ENCODE measurements at regions of chr12 and their contacts with region 1.

Region 1: DNA sequence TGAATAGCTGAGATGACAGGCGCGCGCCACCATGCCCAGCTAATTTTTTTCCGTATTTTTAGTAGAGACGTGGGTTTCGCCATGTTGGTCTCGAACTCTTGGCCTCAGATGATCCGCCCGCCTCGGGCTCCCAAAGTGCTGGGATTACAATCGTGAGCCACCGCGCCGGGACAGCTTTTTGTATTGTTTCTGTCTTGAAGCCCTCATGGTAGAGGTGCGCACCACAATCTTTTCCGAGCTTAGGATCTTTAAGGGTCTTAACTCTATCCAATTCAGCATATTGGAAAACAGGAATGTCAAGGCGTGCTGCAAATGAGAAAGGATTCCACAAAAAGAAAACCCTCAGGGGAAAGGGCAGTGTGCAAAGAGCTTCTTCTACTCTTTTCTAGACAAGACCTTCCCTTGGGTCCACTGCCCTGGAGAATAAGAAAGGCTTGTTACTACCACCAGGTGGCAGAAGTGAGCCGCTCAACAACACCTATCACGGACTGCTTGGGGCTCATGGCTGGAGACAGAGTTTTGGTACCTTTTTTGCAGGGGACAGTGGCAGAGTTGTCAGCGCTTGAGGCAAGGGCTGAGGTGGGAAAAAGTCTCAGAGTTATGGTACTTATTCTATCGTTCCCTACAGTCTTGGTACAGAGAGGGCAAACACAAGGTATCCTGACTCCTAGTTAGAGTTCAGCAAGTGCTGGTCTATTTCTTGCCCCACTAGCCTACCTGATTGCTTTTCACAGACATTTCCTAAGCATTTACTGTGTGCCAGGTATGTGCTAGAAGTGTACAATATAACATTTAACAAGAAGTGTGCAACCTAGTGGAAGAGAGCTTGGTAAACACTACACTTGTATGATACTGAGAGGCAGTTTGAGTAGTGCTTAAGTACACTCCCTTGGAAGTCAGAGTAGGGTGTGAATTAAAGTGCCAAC is 16.4 kb upstream of the SP7 start:
- DNase-seq: peak; percentile 92
- ATAC-seq: peak; percentile 99
- H3K4me3 Mint-ChIP-seq: no peak overlapping the region
- H3K27ac Mint-ChIP-seq: peak overlapping the region; percentile 23
- H3K4me1 Mint-ChIP-seq: peaks cover 9% of the 10 kb centered on the region
- H3K27me3 Mint-ChIP-seq: no peaks in the 10 kb centered on the region

Region 2: DNA sequence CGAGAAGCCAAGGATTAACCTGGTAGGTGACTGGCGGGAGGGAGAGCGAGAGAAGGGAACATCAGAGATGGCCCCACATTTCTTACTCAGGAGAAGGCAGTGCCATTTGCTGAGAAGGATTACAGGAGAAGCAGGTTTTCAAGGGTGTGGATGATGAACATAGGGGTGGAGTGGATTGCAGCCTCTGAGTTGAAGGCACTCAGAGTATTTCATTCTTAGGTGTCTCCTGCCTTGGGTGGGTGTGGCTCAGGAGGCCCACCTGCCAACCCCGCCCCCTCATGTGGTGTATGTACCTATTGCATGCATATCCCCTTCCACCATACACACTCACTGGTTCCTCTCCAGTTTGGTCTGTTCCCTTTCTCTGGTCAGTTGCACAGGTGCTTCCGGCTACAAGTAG is 78.1 kb before region 1 on chr12:
- CTCF ChIA-PET with region 1: no interaction called
- POLR2A ChIA-PET with region 1: no interaction called
- DNase-seq: no peak
- ATAC-seq: no peak
- H3K4me3 Mint-ChIP-seq: no peak overlapping the region
- H3K27ac Mint-ChIP-seq: no peak overlapping the region
- H3K4me1 Mint-ChIP-seq: peaks cover 40% of the 10 kb centered on the region
- H3K27me3 Mint-ChIP-seq: no peaks in the 10 kb centered on the region

Region 3: GRCh38 chr12:53336181-53336681 is 16.4 kb before region 1 on chr12 and contains the start of gene SP7:
- CTCF ChIA-PET with region 1: interaction called, 290 read pairs
- POLR2A ChIA-PET with region 1: interaction called, 3 read pairs
- DNase-seq: no peak
- ATAC-seq: peak; percentile 28
- H3K4me3 Mint-ChIP-seq: no peak within 1 kb of the TSS
- H3K27ac Mint-ChIP-seq: no peak within 1 kb of the TSS
- H3K4me1 Mint-ChIP-seq: peaks cover 16% of the 10 kb centered on the region
- H3K27me3 Mint-ChIP-seq: peaks cover 58% of the 10 kb centered on the region
- total RNA-seq, gene SP7: not detected

Region 4: GRCh38 chr12:53379389-53380103 is 27.0 kb after region 1 on chr12:
- CTCF ChIA-PET with region 1: interaction called, 91 read pairs
- POLR2A ChIA-PET with region 1: interaction called, 12 read pairs
- DNase-seq: peak; percentile 99
- ATAC-seq: peak; percentile 80
- H3K4me3 Mint-ChIP-seq: no peak overlapping the region
- H3K27ac Mint-ChIP-seq: no peak overlapping the region
- H3K4me1 Mint-ChIP-seq: peaks cover 35% of the 10 kb centered on the region
- H3K27me3 Mint-ChIP-seq: no peaks in the 10 kb centered on the region

Region 5: DNA sequence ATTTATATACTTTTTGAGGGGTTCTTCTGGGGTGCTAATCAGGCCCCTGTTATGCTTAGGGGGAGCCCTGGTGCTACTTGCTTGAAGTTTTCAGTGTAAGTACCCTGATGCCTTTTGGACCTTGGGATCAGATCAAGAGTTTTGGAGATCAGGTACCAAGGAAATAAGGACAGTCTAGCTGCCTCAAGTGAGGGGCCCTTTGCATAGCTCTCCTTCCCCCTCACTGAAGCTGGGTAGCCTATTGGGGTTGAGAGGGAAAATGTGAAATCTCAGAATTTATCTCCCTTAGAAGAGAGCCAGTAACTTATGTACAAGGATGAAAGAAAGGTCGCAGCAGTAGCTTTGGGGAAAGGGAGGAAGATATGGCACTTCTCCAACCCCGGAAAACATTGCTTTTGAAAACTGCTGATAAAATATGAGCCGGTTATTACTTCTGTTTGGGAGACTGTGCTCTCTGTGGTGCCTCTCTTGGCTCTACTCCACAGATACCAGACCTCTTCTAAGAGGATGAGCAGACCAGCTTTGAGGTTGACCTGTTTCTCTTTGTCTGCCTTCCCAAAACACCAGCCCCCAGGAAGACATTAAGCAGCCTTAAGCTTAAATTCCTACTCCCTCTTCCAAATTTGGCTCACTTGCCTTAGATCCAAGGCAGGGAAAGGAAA is 62.3 kb after region 1 on chr12:
- CTCF ChIA-PET with region 1: interaction called, 171 read pairs
- POLR2A ChIA-PET with region 1: interaction called, 3 read pairs
- DNase-seq: no peak
- ATAC-seq: no peak
- H3K4me3 Mint-ChIP-seq: no peak overlapping the region
- H3K27ac Mint-ChIP-seq: no peak overlapping the region
- H3K4me1 Mint-ChIP-seq: peaks cover 24% of the 10 kb centered on the region
- H3K27me3 Mint-ChIP-seq: no peaks in the 10 kb centered on the region

Region 6: GRCh38 chr12:53441040-53441833 is 88.6 kb after region 1 on chr12 and contains the start of gene PRR13:
- CTCF ChIA-PET with region 1: interaction called, 11 read pairs
- POLR2A ChIA-PET with region 1: interaction called, 4 read pairs
- DNase-seq: peak; percentile 100
- ATAC-seq: peak; percentile 100
- H3K4me3 Mint-ChIP-seq: peak within 1 kb of the TSS; percentile 97
- H3K27ac Mint-ChIP-seq: peak within 1 kb of the TSS; percentile 95
- H3K4me1 Mint-ChIP-seq: peaks cover 39% of the 10 kb centered on the region
- H3K27me3 Mint-ChIP-seq: no peaks in the 10 kb centered on the region
- total RNA-seq, gene PRR13: 220 TPM

Region 7: GRCh38 chr12:53508534-53509199 is 156.1 kb after region 1 on chr12:
- CTCF ChIA-PET with region 1: interaction called, 49 read pairs
- POLR2A ChIA-PET with region 1: no interaction called
- DNase-seq: peak; percentile 91
- ATAC-seq: peak; percentile 97
- H3K4me3 Mint-ChIP-seq: no peak overlapping the region
- H3K27ac Mint-ChIP-seq: peak overlapping the region; percentile 81
- H3K4me1 Mint-ChIP-seq: peaks cover 18% of the 10 kb centered on the region
- H3K27me3 Mint-ChIP-seq: no peaks in the 10 kb centered on the region

Region 8: GRCh38 chr12:53928054-53928835 is 575.7 kb after region 1 on chr12:
- CTCF ChIA-PET with region 1: no interaction called
- POLR2A ChIA-PET with region 1: no interaction called
- DNase-seq: no peak
- ATAC-seq: no peak
- H3K4me3 Mint-ChIP-seq: no peak overlapping the region
- H3K27ac Mint-ChIP-seq: no peak overlapping the region
- H3K4me1 Mint-ChIP-seq: no peaks in the 10 kb centered on the region
- H3K27me3 Mint-ChIP-seq: peaks cover 83% of the 10 kb centered on the region